Left cardiac atrium (tissue), 4 donors: ENCODE measurements at regions of chr22 and their contacts with region 1.

Region 1: GRCh38 chr22:28600546-28601143 is 79.0 kb downstream of the TTC28 start:
- DNase-seq: no peak
- ATAC-seq: peak in 1 of 2 donors; percentile 57

Region 2: DNA sequence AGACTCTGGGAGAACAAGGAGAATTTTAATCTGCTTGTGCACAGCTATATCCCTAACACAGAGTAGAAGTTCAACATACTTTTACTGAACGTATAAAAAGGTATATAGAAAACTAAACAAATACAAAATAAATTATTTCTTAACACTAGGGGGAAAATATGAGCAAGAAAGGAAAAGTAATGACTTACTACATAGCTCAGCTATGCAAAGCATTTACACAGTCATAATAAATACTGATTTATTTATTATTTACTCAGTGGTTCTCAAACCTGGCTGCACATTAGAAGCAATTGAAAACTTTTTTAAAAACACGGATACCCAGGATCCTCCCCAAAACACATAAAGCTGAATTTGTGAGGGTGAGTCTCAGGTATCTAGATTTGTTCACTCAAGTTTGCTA is 103.5 kb before region 1 on chr22:
- intact Hi-C with region 1: no loop called
- DNase-seq: no peak
- ATAC-seq: no peak

Region 3: DNA sequence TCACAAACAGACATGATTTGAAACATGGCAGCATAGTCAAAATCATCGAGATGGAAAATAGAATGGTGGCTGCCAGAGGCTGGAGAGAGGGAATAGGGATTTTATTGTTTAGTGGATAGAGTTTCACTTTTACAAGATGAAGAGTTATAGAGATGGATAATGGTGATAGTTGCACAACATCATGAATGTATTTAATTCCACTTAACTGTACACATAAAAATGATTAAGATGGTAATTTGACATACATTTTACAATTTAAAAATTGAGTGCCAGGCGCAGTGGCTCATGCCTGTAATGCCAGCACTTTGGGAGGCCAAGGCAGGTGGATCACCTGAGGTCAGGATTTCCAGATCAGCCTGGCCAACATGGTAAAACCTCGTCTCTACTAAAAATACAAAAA is 57.8 kb after region 1 on chr22:
- intact Hi-C with region 1: no loop called
- DNase-seq: no peak
- ATAC-seq: no peak

Region 4: DNA sequence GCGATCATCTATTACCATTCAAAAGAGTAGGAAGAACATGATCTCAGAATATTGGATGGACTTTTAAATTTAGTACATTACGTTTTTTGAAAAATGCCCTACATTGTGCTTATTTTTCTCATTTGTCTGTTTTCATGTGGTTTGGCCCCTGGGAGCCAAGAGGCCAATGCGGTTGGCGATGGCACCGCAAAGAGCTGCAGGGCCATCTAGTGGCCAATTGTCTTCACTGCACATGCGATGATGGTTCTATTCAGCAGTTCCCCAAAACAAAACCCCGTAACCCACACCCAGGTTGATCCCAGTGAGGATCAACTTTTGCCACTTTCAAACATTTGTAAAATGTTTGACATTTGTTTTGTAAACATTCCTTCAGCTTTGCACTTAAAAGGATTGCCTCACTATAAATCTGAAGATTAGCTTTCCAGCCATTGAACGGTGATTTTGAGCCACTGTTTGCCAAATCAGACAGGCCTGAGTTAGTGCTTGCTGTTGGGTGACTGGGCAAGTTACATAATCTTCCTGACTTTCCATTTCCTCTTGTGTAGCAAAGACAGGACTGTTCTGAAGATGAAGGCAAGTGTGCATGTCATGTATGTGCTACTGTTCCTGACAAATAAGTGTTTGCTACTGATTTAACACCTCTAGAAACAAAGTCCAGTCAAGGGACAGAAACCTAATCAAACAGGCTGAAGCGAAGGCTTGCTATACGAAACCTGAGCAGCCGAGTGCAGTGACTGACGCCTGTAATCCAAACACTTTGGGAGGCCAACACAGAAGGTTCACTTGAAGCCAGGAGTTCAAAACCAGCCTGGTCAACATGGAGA is 228.9 kb after region 1 on chr22:
- intact Hi-C with region 1: loop called (anchors 2 to 5 kb)
- DNase-seq: peak; percentile 78
- ATAC-seq: peak; percentile 90 to 92

Region 5: DNA sequence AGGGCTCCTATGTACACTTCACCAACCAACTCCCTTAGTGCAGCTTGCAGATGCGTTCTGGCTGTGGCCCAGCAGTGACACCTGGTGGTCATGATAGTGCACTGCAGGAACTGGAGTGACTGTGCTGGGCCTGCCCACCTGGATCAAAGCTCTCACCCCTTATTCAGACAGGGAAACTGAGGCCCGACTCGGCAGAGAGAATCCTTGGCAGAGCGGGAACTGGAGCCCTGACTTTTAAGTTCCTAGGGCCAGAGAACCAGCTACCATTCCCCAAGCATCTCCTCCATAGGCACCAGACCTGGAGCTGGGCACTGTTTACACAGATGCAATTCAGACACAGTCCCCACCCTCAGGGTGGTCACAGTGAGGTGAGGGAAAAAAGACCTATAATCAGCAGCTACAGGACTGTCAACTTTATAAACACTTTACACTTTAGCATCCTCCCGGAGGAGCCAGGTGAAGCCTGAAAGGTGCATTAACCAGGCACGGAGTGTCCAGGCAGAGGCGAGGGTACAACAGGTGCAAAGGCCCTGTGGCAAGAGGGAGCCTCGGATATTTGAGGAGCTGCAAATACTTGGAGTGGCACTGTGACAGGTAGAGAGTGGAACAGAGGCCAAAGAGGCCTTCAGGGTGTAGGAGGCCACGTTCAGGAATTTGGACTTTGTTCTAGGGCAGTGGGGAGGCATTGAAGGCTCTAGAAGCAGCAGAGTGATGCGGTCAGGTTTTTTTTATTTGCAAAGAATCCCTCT is 645.2 kb after region 1 on chr22:
- intact Hi-C with region 1: loop called in 1 of 2 experiments (anchors 10 kb)
- DNase-seq: peak; percentile 70
- ATAC-seq: peak; percentile 93 to 94